IMR-90 (cell line): ENCODE measurements at regions of chr7 and their contacts with region 1.

Region 1: DNA sequence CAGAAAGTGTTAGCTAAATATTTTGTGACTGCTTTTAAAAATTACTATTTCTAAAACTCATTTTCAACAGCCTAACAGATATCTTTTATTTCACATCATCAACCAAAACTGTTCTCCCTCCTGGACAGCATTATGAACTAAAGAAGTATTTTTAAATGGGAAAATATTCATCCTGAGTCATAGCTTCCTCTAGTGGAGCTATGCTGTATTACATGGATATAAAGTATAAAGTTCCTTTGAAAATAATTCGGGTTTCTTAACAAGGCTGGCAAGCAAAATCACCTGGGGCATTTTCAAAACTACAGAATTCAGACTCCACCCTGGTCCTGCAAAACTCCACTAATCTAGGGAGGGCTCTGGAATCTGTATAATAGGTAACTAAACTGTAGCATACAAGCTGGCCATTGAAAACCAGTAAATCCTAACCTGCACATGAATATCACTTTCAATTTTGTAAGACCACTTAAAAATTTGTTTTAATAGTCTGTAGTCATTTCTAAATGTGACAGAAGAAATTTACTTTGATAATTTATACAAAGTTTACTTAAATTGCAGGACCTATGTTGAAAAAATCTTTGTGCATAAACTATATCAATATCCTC is 53.5 kb downstream of the SCIN start:
- DNase-seq: peak; percentile 31
- ATAC-seq: peak; percentile 85
- H3K4me3 ChIP-seq: no peak overlapping the region
- H3K27ac ChIP-seq: no peak overlapping the region
- H3K4me1 ChIP-seq: no peaks in the 10 kb centered on the region; the same call in 1 of the 2 replicates
- H3K27me3 ChIP-seq: peaks cover 8% of the 10 kb centered on the region
- CTCF ChIP-seq: peak; percentile 82
- POLR2A ChIP-seq: no peak
- RAD21 ChIP-seq: peak; percentile 78

Region 2: DNA sequence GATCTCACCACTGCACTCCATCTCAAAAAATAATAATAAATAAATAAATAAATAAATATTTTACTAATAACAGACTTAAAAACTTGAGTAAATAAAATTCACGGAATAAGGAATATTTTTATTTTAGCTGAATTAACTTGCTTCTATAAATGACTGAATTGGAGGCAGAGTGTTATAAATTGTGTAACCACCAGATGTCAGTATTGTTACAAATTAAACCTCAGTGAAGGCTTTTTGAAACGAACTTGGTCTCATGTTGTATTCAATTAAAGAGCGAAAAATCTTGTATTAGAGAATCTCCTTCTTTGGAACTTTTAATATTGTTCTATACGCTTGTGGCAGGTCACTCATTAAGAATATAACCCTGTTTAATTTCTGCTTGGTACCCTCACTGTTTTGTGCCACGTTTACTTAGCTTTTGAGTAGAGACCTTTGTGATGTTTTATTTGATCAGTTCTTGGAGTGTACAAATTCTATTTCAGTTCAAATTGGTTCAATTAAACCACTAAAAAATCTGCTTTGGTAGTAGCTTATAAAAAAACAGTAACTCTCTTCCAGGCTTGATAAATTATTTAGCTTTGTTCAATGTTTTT is 99.1 kb before region 1 on chr7:
- CTCF ChIA-PET with region 1: interaction called, 42 read pairs
- POLR2A ChIA-PET with region 1: no interaction called
- dilution Hi-C with region 1: no loop called
- in situ Hi-C with region 1: loop called (anchors 5 kb)
- intact Hi-C with region 1: loop called (anchors 1 kb)
- DNase-seq: peak; percentile 69
- ATAC-seq: peak; percentile 67; the same call in 1 of the 2 replicates
- H3K4me3 ChIP-seq: no peak overlapping the region
- H3K27ac ChIP-seq: no peak overlapping the region
- H3K4me1 ChIP-seq: no peaks in the 10 kb centered on the region
- H3K27me3 ChIP-seq: peaks cover 1% of the 10 kb centered on the region; the same call in 1 of the 2 replicates
- CTCF ChIP-seq: peak; percentile 76
- POLR2A ChIP-seq: no peak
- RAD21 ChIP-seq: peak; percentile 66

Region 3: DNA sequence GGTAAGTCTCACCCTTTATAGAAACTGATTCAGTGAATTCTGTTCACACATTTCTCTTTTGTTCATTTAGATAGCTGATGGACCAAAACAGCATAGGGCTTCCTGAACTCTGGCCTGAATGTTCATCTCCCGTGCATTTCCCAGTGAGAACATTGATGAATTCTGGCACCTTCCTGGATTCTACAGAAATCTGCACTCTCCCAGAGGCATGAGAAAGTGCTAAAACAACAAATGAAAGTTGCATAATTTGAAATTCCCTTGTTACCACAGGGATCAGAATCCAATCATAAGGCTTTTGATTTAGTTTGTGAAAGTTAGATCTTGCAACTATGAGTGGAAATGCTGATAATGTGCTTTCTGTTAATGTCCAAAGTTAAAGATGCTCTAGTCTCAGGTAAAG is 83.1 kb before region 1 on chr7:
- CTCF ChIA-PET with region 1: interaction called, 3 read pairs
- POLR2A ChIA-PET with region 1: no interaction called
- dilution Hi-C with region 1: no loop called
- in situ Hi-C with region 1: no loop called
- intact Hi-C with region 1: loop called (anchors 5 kb)
- DNase-seq: no peak
- ATAC-seq: no peak
- H3K4me3 ChIP-seq: no peak overlapping the region
- H3K27ac ChIP-seq: no peak overlapping the region
- H3K4me1 ChIP-seq: no peaks in the 10 kb centered on the region
- H3K27me3 ChIP-seq: no peaks in the 10 kb centered on the region
- CTCF ChIP-seq: no peak
- POLR2A ChIP-seq: no peak
- RAD21 ChIP-seq: no peak

Region 4: GRCh38 chr7:12567015-12567414 is 57.0 kb before region 1 on chr7:
- CTCF ChIA-PET with region 1: no interaction called
- POLR2A ChIA-PET with region 1: no interaction called
- dilution Hi-C with region 1: no loop called
- in situ Hi-C with region 1: no loop called
- intact Hi-C with region 1: no loop called
- DNase-seq: no peak
- ATAC-seq: no peak
- H3K4me3 ChIP-seq: no peak overlapping the region
- H3K27ac ChIP-seq: no peak overlapping the region
- H3K4me1 ChIP-seq: no peaks in the 10 kb centered on the region
- H3K27me3 ChIP-seq: peaks cover 28% of the 10 kb centered on the region
- CTCF ChIP-seq: no peak
- POLR2A ChIP-seq: no peak
- RAD21 ChIP-seq: no peak